ENCODE measurements at regions of chr1 and their contacts with region 1.

Region 1: DNA sequence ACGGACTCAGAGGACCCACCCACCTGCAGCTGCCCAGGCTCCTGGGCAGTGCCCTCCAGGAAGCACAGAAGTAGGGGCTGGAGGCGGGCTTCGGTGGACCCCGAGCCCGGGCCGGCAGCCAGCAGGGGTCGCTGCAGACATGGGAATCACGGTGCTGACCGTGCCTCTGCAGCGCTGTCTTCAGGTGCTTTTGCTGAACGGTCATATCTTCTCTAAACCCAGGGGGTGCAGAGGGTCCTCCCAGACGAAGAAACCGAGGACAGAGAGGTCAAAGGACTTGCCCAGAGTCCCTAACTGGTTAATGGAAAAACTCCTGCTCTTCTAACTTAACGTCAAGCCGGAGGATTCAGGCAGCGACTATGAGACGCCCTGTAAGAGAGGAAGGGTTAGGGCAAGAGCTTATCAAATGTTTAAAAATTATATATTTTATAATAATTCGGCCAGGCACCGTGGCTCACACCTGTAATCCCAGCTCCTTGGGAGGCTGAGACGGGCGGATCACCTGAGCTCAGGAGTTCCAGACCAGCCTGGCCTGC is 21.5 kb upstream of the LEFTY2 start:
- DNase-seq: peak; percentile 85
- ATAC-seq: peak; percentile 95
- H3K4me3 Mint-ChIP-seq: no peak overlapping the region
- H3K27ac Mint-ChIP-seq: no peak overlapping the region
- H3K4me1 Mint-ChIP-seq: peaks cover 4% of the 10 kb centered on the region
- H3K27me3 Mint-ChIP-seq: no peaks in the 10 kb centered on the region
- CTCF ChIP-seq: peak; percentile 94

Region 2: GRCh38 chr1:225845571-225846259 is 116.8 kb before region 1 on chr1:
- CTCF ChIA-PET with region 1: no interaction called
- POLR2A ChIA-PET with region 1: no interaction called
- intact Hi-C with region 1: no loop called
- DNase-seq: peak; percentile 44
- ATAC-seq: no peak
- H3K4me3 Mint-ChIP-seq: no peak overlapping the region
- H3K27ac Mint-ChIP-seq: peak overlapping the region; percentile 40
- H3K4me1 Mint-ChIP-seq: peaks cover 46% of the 10 kb centered on the region
- H3K27me3 Mint-ChIP-seq: no peaks in the 10 kb centered on the region
- CTCF ChIP-seq: peak; percentile 40

Region 3: GRCh38 chr1:225904886-225905285 is 57.6 kb before region 1 on chr1:
- CTCF ChIA-PET with region 1: no interaction called
- POLR2A ChIA-PET with region 1: no interaction called
- intact Hi-C with region 1: no loop called
- DNase-seq: no peak
- ATAC-seq: no peak
- H3K4me3 Mint-ChIP-seq: no peak overlapping the region
- H3K27ac Mint-ChIP-seq: no peak overlapping the region
- H3K4me1 Mint-ChIP-seq: peaks cover 10% of the 10 kb centered on the region
- H3K27me3 Mint-ChIP-seq: no peaks in the 10 kb centered on the region
- CTCF ChIP-seq: no peak

Region 4: GRCh38 chr1:225944951-225945350 is 17.6 kb before region 1 on chr1:
- CTCF ChIA-PET with region 1: interaction called, 28 read pairs
- POLR2A ChIA-PET with region 1: no interaction called
- intact Hi-C with region 1: no loop called
- DNase-seq: no peak
- ATAC-seq: peak; percentile 60
- H3K4me3 Mint-ChIP-seq: no peak overlapping the region
- H3K27ac Mint-ChIP-seq: no peak overlapping the region
- H3K4me1 Mint-ChIP-seq: peaks cover 5% of the 10 kb centered on the region
- H3K27me3 Mint-ChIP-seq: no peaks in the 10 kb centered on the region
- CTCF ChIP-seq: no peak

Region 5: DNA sequence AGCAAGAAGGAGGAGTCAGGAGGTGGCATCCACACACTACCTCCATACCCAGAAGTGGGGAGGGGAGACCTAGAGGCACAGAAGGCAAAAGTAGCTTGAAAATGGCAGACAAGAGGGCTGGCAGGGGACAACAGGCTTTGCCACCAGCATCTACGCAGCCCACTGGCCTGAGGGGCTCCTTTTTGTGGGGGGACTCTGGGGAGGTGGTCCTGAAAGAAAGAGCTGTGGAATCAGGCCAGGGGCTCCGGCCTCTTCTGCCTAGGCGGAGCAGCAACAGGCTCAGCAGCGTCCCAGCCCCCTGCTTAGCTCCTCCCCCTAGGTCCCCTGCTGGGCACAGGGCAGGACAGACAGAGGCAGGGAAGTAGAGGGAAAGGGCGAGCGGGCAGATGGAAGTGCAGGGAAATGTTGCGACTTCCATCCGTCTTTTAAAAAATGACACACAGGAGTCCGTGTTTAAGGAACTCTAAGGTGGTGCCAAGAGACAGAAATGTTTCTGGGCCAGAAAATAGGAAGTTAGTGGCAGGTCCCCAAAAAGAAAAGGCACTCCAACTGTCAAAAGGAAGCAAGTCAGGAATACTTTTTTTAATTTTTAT is 11.5 kb before region 1 on chr1:
- CTCF ChIA-PET with region 1: interaction called, 28 read pairs
- POLR2A ChIA-PET with region 1: no interaction called
- intact Hi-C with region 1: no loop called
- DNase-seq: no peak
- ATAC-seq: no peak
- H3K4me3 Mint-ChIP-seq: no peak overlapping the region
- H3K27ac Mint-ChIP-seq: no peak overlapping the region
- H3K4me1 Mint-ChIP-seq: no peaks in the 10 kb centered on the region
- H3K27me3 Mint-ChIP-seq: peaks cover 3% of the 10 kb centered on the region
- CTCF ChIP-seq: no peak

Region 6: GRCh38 chr1:225977937-225978748 is 15.6 kb after region 1 on chr1:
- CTCF ChIA-PET with region 1: interaction called, 35 read pairs
- POLR2A ChIA-PET with region 1: interaction called, 3 read pairs
- intact Hi-C with region 1: no loop called
- DNase-seq: no peak
- ATAC-seq: no peak
- H3K4me3 Mint-ChIP-seq: no peak overlapping the region
- H3K27ac Mint-ChIP-seq: peak overlapping the region; percentile 10
- H3K4me1 Mint-ChIP-seq: peaks cover 11% of the 10 kb centered on the region
- H3K27me3 Mint-ChIP-seq: no peaks in the 10 kb centered on the region
- CTCF ChIP-seq: no peak

Region 7: GRCh38 chr1:225987491-225988316 is 25.2 kb after region 1 on chr1:
- CTCF ChIA-PET with region 1: interaction called, 11 read pairs
- POLR2A ChIA-PET with region 1: no interaction called
- intact Hi-C with region 1: no loop called
- DNase-seq: no peak
- ATAC-seq: peak; percentile 63
- H3K4me3 Mint-ChIP-seq: no peak overlapping the region
- H3K27ac Mint-ChIP-seq: no peak overlapping the region
- H3K4me1 Mint-ChIP-seq: peaks cover 34% of the 10 kb centered on the region
- H3K27me3 Mint-ChIP-seq: no peaks in the 10 kb centered on the region
- CTCF ChIP-seq: peak; percentile 78

Measured in activated CD8-positive, alpha-beta T cell treated with anti-CD3 and anti-CD28 coated beads for 36 hours (primary cell).